Spleen (tissue), 13 donors: ENCODE measurements at regions of chr11 and their contacts with region 1.

Region 1: DNA sequence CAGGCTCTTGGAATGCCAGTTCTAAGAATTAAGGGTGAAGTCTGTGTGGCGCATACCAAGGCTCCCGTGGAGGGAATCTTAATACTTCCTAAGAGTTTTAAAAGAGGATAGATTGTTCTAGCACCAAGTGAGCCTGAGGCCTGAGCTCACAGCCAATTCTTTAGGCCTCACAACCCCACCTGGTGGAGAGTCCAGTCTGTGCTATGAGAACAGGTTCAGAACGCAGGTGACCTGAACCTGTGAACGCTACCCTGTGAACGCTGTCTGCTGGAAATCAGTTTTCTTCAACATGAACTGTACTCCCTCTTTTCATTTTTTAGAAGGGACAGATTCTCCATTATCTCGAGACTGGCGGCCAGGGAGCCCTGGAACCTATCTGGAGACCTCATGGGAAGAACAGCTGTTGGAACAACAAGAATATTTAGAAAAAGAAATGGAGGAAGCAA is 43.2 kb upstream of the DLAT start:
- DNase-seq: no peak
- H3K4me3 ChIP-seq: no peak overlapping the region
- H3K27ac ChIP-seq: no peak overlapping the region
- H3K4me1 ChIP-seq: peaks cover 5 to 18% (median 12%) of the 10 kb centered on the region in 6 donors
- H3K27me3 ChIP-seq: peaks cover 0 to 38% (median 8%) of the 10 kb centered on the region in 7 donors
- CTCF ChIP-seq: peak in 6 of 11 experiments; percentile 7 to 48 (median 42)
- POLR2A ChIP-seq: no peak

Region 2: GRCh38 chr11:111938687-111939160 is 43.3 kb before region 1 on chr11:
- intact Hi-C with region 1: loop called (anchors 10 kb)
- DNase-seq: no peak
- H3K4me3 ChIP-seq: no peak overlapping the region
- H3K27ac ChIP-seq: peak overlapping the region in 2 of 8 donors; percentile 6 to 32
- H3K4me1 ChIP-seq: peaks cover 13 to 44% (median 37%) of the 10 kb centered on the region in 6 donors
- H3K27me3 ChIP-seq: peaks cover 0 to 4% (median 0%) of the 10 kb centered on the region in 7 donors
- CTCF ChIP-seq: no peak
- POLR2A ChIP-seq: no peak